ENCODE measurements at regions of chr16 and their contacts with region 1.

Region 1: GRCh38 chr16:48526058-48526957 is 83.7 kb downstream of the N4BP1 start:
- DNase-seq: no peak
- ATAC-seq: peak; percentile 83
- H3K4me3 Mint-ChIP-seq: no peak overlapping the region
- H3K27ac Mint-ChIP-seq: no peak overlapping the region
- H3K4me1 Mint-ChIP-seq: peaks cover 18% of the 10 kb centered on the region
- H3K27me3 Mint-ChIP-seq: no peaks in the 10 kb centered on the region
- CTCF ChIP-seq: no peak

Region 2: GRCh38 chr16:48353565-48354163 is 172.6 kb before region 1 on chr16:
- CTCF ChIA-PET with region 1: interaction called, 56 read pairs
- POLR2A ChIA-PET with region 1: interaction called, 9 read pairs
- intact Hi-C with region 1: loop called (anchors 1 kb)
- DNase-seq: no peak
- ATAC-seq: peak; percentile 93
- H3K4me3 Mint-ChIP-seq: no peak overlapping the region
- H3K27ac Mint-ChIP-seq: peak overlapping the region; percentile 5
- H3K4me1 Mint-ChIP-seq: peaks cover 28% of the 10 kb centered on the region
- H3K27me3 Mint-ChIP-seq: no peaks in the 10 kb centered on the region
- CTCF ChIP-seq: peak; percentile 53

Region 3: GRCh38 chr16:48459167-48459566 is 67.1 kb before region 1 on chr16:
- CTCF ChIA-PET with region 1: no interaction called
- POLR2A ChIA-PET with region 1: no interaction called
- intact Hi-C with region 1: loop called (anchors 2 kb)
- DNase-seq: no peak
- ATAC-seq: no peak
- H3K4me3 Mint-ChIP-seq: peak overlapping the region; percentile 1
- H3K27ac Mint-ChIP-seq: peak overlapping the region; percentile 69
- H3K4me1 Mint-ChIP-seq: peaks cover 64% of the 10 kb centered on the region
- H3K27me3 Mint-ChIP-seq: no peaks in the 10 kb centered on the region
- CTCF ChIP-seq: no peak

Region 4: GRCh38 chr16:48511071-48511540 is 15.2 kb before region 1 on chr16:
- CTCF ChIA-PET with region 1: no interaction called
- POLR2A ChIA-PET with region 1: no interaction called
- intact Hi-C with region 1: no loop called
- DNase-seq: no peak
- ATAC-seq: no peak
- H3K4me3 Mint-ChIP-seq: no peak overlapping the region
- H3K27ac Mint-ChIP-seq: no peak overlapping the region
- H3K4me1 Mint-ChIP-seq: no peaks in the 10 kb centered on the region
- H3K27me3 Mint-ChIP-seq: no peaks in the 10 kb centered on the region
- CTCF ChIP-seq: no peak